H1 (cell line): ENCODE measurements at regions of chr9 and their contacts with region 1.

Region 1: GRCh38 chr9:6931913-6932312 is 174.1 kb downstream of the KDM4C start:
- DNase-seq: no peak
- H3K4me3 ChIP-seq: no peak overlapping the region
- H3K27ac ChIP-seq: no peak overlapping the region
- H3K4me1 ChIP-seq: no peaks in the 10 kb centered on the region
- H3K27me3 ChIP-seq: no peaks in the 10 kb centered on the region
- CTCF ChIP-seq: no peak
- EP300 ChIP-seq: no peak
- POLR2A ChIP-seq: no peak
- RAD21 ChIP-seq: no peak

Region 2: GRCh38 chr9:6917162-6917561 is 14.8 kb before region 1 on chr9:
- CTCF ChIA-PET with region 1: no interaction called
- POLR2A ChIA-PET with region 1: no interaction called
- DNase-seq: no peak
- H3K4me3 ChIP-seq: no peak overlapping the region
- H3K27ac ChIP-seq: no peak overlapping the region
- H3K4me1 ChIP-seq: peaks cover 0 to 7% (median 0%) of the 10 kb centered on the region in 4 experiments; a peak in 1 of 7 replicates
- H3K27me3 ChIP-seq: no peaks in the 10 kb centered on the region
- CTCF ChIP-seq: no peak
- EP300 ChIP-seq: no peak
- POLR2A ChIP-seq: no peak
- RAD21 ChIP-seq: no peak

Region 3: GRCh38 chr9:6944093-6944551 is 12.2 kb after region 1 on chr9:
- CTCF ChIA-PET with region 1: interaction called, 12 read pairs
- POLR2A ChIA-PET with region 1: no interaction called
- DNase-seq: no peak
- H3K4me3 ChIP-seq: no peak overlapping the region
- H3K27ac ChIP-seq: no peak overlapping the region
- H3K4me1 ChIP-seq: peaks cover 0 to 3% (median 0%) of the 10 kb centered on the region in 4 experiments; a peak in 1 of 7 replicates
- H3K27me3 ChIP-seq: no peaks in the 10 kb centered on the region
- CTCF ChIP-seq: no peak
- EP300 ChIP-seq: no peak
- POLR2A ChIP-seq: no peak
- RAD21 ChIP-seq: no peak